Left cardiac atrium (tissue), 4 donors: ENCODE measurements at regions of chr6 and their contacts with region 1.

Region 1: GRCh38 chr6:18503593-18504231 is 116.6 kb downstream of the RNF144B start:
- DNase-seq: peak; percentile 42
- ATAC-seq: peak; percentile 81 to 85

Region 2: DNA sequence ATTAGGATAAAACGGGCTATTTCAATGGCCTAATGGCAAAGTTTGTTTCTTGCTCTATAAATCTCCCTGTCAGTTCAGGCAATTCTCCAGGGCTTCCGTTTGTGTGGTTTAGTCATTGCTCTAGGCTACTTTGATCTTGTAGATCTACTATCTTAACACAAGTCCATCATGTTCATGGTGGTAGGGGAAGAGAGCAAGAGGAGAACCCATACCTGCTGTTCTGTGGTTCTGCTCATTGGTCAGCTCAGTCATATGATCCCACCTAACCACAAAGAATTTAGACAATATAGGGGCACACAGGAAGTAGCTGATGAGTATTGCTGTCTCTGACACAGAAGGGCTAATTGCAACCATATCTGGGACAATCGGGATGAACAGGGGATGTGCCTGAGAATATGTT is 234.5 kb before region 1 on chr6:
- intact Hi-C with region 1: no loop called
- DNase-seq: no peak
- ATAC-seq: no peak

Region 3: GRCh38 chr6:18323935-18324705 is 179.6 kb before region 1 on chr6:
- intact Hi-C with region 1: loop called (anchors 1 to 5 kb)
- DNase-seq: no peak
- ATAC-seq: peak; percentile 70 to 72

Region 4: GRCh38 chr6:18536663-18537062 is 33.0 kb after region 1 on chr6:
- intact Hi-C with region 1: no loop called
- DNase-seq: no peak
- ATAC-seq: no peak

Region 5: DNA sequence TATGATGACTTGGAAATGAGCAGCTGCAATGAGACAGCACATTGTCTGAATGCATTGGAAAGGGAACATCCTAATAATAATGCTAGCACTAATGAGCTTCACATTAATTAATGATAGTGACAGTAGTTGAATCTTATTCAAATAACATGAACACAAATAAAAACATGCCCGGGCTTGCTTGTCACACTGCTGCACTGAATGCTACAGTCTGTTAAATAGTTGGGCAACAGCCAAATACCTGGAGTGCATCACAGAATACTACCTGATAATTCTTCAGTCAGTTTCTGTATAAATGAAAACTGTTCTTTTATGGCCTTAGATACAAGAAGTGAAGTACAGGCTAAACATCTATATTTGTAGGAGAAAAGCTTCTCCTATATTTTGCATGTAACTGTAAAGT is 342.2 kb after region 1 on chr6:
- intact Hi-C with region 1: no loop called
- DNase-seq: no peak
- ATAC-seq: no peak